OCI-LY7 (cell line): ENCODE measurements at regions of chr6 and their contacts with region 1.

Region 1: GRCh38 chr6:107763946-107764345 is 60.2 kb downstream of the SCML4 start:
- DNase-seq: no peak
- H3K4me3 ChIP-seq: no peak overlapping the region
- H3K27ac ChIP-seq: no peak overlapping the region
- H3K4me1 ChIP-seq: no peaks in the 10 kb centered on the region
- CTCF ChIP-seq: no peak

Region 2: DNA sequence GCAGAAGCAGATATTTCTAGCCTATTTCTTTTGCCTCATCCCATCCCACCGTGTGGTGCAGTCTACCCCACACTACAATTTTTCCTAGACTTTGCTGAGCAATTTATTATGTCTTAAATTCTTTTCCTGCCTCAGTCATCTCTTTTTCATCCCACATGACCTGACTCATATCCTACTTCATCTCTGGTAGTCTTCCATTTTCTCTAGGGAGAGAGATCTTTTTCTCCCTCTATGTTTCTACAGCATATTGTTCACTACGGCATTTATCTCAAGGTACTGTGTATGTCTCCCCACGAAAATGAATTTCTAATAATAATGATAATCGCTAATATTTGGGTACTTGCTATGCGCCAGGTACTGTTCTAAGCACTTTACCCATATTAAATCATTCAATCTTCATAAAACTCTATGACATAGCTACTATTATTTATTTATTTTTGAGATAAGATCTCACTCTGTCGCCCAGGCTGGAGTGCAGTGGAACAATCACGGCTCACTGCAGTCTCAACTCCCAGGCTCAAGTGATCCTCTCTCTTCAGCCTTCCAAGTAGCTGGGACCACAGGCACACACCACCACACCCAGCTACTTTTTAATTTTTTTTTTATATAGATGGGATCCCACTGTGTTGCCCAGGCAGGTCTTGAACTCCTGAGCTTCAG is 320.2 kb before region 1 on chr6:
- CTCF ChIA-PET with region 1: no interaction called
- POLR2A ChIA-PET with region 1: no interaction called
- intact Hi-C with region 1: no loop called
- DNase-seq: no peak
- H3K4me3 ChIP-seq: no peak overlapping the region
- H3K27ac ChIP-seq: no peak overlapping the region
- H3K4me1 ChIP-seq: no peaks in the 10 kb centered on the region
- CTCF ChIP-seq: no peak

Region 3: DNA sequence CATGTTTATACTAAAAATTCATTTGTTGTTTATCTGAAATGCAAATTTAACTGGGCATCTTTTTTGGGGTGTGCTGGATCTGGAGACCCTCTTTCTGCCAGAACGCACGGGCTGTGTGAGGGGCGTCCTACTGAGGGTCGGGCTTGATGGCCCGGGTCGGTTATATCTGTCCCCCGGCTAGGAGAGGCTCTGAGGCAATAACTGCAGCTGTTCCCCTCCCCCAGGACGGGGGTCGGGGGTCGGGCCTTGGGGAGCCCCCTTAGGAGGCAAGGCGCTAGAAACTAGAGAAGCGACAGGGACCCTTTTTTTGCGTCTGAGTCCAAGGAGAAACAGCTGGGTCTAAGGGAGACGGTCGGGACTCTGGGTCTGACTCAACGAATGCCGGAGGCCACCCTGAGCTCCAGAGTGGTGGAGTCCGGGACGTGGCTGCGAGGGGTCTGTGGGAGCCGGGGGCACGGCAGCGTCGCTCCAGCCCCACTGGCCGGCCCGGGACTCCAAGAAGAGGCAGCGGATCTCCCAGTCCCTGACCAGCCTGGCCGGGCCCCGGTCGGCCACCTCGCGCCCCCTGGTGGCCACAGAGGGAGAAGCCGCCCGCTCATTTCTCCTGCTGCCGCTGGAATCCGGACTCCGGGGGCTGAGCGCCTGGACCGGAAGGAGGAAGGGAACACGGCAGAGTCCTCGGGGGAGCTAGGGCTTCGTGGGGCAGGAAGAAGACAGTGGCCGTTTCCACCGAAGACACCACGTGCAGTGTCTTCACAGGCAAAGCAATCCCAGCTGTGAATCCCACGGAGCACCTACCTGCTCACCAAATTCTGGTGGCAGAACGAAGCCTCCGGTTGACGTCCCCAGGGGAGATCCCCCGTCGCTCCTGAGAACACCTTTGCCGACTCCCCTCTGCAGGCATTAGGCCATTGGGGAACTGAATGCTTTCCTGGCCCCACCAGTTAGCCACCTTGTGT is 84.2 kb after region 1 on chr6:
- CTCF ChIA-PET with region 1: no interaction called
- POLR2A ChIA-PET with region 1: no interaction called
- intact Hi-C with region 1: no loop called
- DNase-seq: peak; percentile 68
- H3K4me3 ChIP-seq: peak overlapping the region; percentile 49
- H3K27ac ChIP-seq: no peak overlapping the region
- H3K4me1 ChIP-seq: peaks cover 6% of the 10 kb centered on the region
- CTCF ChIP-seq: peak; percentile 95

Region 4: GRCh38 chr6:108097882-108098281 is 333.9 kb after region 1 on chr6:
- CTCF ChIA-PET with region 1: no interaction called
- POLR2A ChIA-PET with region 1: interaction called, 10 read pairs
- intact Hi-C with region 1: no loop called
- DNase-seq: no peak
- H3K4me3 ChIP-seq: no peak overlapping the region
- H3K27ac ChIP-seq: no peak overlapping the region
- H3K4me1 ChIP-seq: no peaks in the 10 kb centered on the region
- CTCF ChIP-seq: no peak